PC-3 (cell line): ENCODE measurements at regions of chr7 and their contacts with region 1.

Region 1: GRCh38 chr7:119270045-119270464 is 1002.9 kb upstream of the KCND2 start:
- DNase-seq: peak; percentile 82
- ATAC-seq: peak; percentile 68
- H3K4me3 ChIP-seq: no peak overlapping the region
- H3K27ac ChIP-seq: peak overlapping the region; percentile 53
- H3K4me1 ChIP-seq: peaks cover 15% of the 10 kb centered on the region
- H3K27me3 ChIP-seq: no peaks in the 10 kb centered on the region
- CTCF ChIP-seq: peak; percentile 89

Region 2: DNA sequence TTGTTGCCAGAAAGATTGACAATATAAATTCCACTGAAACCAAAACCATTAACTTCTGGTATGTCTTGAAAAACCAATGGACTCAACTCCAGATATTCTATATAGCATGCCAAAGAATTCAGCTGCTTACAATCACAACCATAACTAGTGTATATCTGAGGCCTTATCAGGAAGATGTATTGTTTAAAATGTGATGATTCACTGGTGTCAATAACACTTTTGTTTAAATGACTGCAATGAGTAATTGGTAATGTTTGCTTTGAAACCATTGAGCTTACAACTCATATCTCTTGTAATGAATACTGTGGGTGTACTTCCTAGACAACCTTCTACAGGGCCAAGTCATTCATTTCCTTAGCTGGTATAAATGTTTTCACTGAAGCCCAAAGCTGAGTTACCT is 275.1 kb after region 1 on chr7:
- CTCF ChIA-PET with region 1: no interaction called
- POLR2A ChIA-PET with region 1: no interaction called
- intact Hi-C with region 1: loop called (anchors 2 kb)
- DNase-seq: peak; percentile 92
- ATAC-seq: peak; percentile 91
- H3K4me3 ChIP-seq: no peak overlapping the region
- H3K27ac ChIP-seq: peak overlapping the region; percentile 67
- H3K4me1 ChIP-seq: peaks cover 33% of the 10 kb centered on the region
- H3K27me3 ChIP-seq: no peaks in the 10 kb centered on the region
- CTCF ChIP-seq: no peak

Region 3: DNA sequence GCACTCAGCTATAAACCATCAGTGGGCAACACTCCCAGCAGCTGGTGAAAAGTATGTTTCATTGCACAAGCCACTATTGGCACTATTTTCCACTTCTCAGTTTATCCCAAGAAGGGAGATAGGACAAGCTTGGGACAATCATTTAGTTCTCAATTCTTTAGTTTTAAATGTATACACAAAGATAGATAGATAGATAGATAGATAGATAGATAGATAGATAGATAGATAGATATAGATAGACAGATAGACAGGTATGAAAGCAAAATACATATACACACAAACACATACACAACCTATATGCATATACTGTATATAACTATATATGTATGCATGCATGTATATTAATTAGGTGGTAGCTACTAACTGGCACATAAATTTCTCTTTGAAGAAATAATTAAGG is 591.3 kb after region 1 on chr7:
- CTCF ChIA-PET with region 1: no interaction called
- POLR2A ChIA-PET with region 1: no interaction called
- intact Hi-C with region 1: loop called (anchors 2 kb)
- DNase-seq: no peak
- ATAC-seq: no peak
- H3K4me3 ChIP-seq: no peak overlapping the region
- H3K27ac ChIP-seq: no peak overlapping the region
- H3K4me1 ChIP-seq: no peaks in the 10 kb centered on the region
- H3K27me3 ChIP-seq: no peaks in the 10 kb centered on the region
- CTCF ChIP-seq: no peak

Region 4: GRCh38 chr7:120089968-120090367 is 819.9 kb after region 1 on chr7:
- CTCF ChIA-PET with region 1: no interaction called
- POLR2A ChIA-PET with region 1: no interaction called
- intact Hi-C with region 1: loop called (anchors 1 kb)
- DNase-seq: peak; percentile 65
- ATAC-seq: peak; percentile 98
- H3K4me3 ChIP-seq: no peak overlapping the region
- H3K27ac ChIP-seq: no peak overlapping the region
- H3K4me1 ChIP-seq: no peaks in the 10 kb centered on the region
- H3K27me3 ChIP-seq: no peaks in the 10 kb centered on the region
- CTCF ChIP-seq: peak; percentile 59

Region 5: GRCh38 chr7:120554960-120555571 is 1285.0 kb after region 1 on chr7:
- CTCF ChIA-PET with region 1: no interaction called
- POLR2A ChIA-PET with region 1: no interaction called
- intact Hi-C with region 1: loop called (anchors 1 kb)
- DNase-seq: peak; percentile 71
- ATAC-seq: peak; percentile 95
- H3K4me3 ChIP-seq: no peak overlapping the region
- H3K27ac ChIP-seq: no peak overlapping the region
- H3K4me1 ChIP-seq: no peaks in the 10 kb centered on the region
- H3K27me3 ChIP-seq: no peaks in the 10 kb centered on the region
- CTCF ChIP-seq: peak; percentile 87